CD14-positive monocyte (primary cell): ENCODE measurements at regions of chr12 and their contacts with region 1.

Region 1: DNA sequence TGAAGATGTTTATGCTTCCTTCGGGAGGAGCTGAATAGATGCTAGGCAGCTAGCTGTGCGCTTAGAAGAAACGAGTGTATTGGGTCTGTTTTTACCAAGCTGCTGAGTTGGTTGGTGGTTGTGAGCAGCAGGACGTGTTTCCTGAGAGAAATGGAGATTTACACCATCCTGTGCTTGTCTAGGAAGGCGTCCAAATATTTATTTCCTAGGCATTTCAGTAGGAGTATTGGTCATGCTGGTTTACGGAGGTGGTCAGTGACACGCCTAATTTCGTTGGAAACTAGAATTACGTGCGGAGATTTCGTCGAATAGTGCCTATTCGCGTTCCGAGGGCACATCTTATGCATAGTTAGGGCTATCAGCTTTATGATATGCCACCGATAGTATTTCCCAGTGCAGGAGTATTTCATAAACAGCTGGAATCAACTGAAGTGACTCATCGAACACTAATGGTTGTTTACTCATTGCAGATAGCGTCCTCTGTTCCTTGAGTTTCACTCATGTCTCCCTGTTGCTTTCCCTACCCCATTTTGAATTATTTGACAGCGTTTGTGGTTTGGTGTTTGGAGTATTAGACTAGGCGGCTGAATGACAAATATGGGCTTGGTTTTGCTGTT is 780 bp downstream of the TBC1D15 start:
- DNase-seq: peak; percentile 56 to 86 (median 77)
- H3K4me3 ChIP-seq: peak overlapping the region; percentile 88 to 97 (median 95)
- H3K4me3 Mint-ChIP-seq: peak overlapping the region; percentile 81 to 93
- H3K27ac ChIP-seq: peak overlapping the region; percentile 98 to 99
- H3K27ac Mint-ChIP-seq: peak overlapping the region; percentile 95 to 99 (median 98)
- H3K4me1 ChIP-seq: peaks cover 21 to 24% of the 10 kb centered on the region in 2 donors
- H3K4me1 Mint-ChIP-seq: peaks cover 23% of the 10 kb centered on the region
- H3K27me3 ChIP-seq: no peaks in the 10 kb centered on the region
- H3K27me3 Mint-ChIP-seq: peaks cover 0 to 2% (median 0%) of the 10 kb centered on the region in 3 donors
- CTCF ChIP-seq: no peak

Region 2: GRCh38 chr12:71663561-71664294 is 176.6 kb before region 1 on chr12 and contains the start of gene ZFC3H1:
- intact Hi-C with region 1: loop called in 1 of 2 experiments (anchors 10 kb)
- DNase-seq: peak; percentile 99 to 100 (median 99)
- H3K4me3 ChIP-seq: peak within 1 kb of the TSS; percentile 72 to 88 (median 84)
- H3K4me3 Mint-ChIP-seq: peak within 1 kb of the TSS; percentile 94 to 100
- H3K27ac ChIP-seq: peak within 1 kb of the TSS; percentile 92 to 100
- H3K27ac Mint-ChIP-seq: peak within 1 kb of the TSS; percentile 100
- H3K4me1 ChIP-seq: peaks cover 24 to 27% of the 10 kb centered on the region in 2 donors
- H3K4me1 Mint-ChIP-seq: peaks cover 22% of the 10 kb centered on the region
- H3K27me3 ChIP-seq: no peaks in the 10 kb centered on the region
- H3K27me3 Mint-ChIP-seq: peaks cover 0 to 2% (median 2%) of the 10 kb centered on the region in 3 donors
- CTCF ChIP-seq: peak; percentile 11
- polyA plus RNA-seq, gene ZFC3H1: 12.5 to 57.0 (median 16.3) TPM

Region 3: GRCh38 chr12:71772735-71773134 is 67.6 kb before region 1 on chr12:
- intact Hi-C with region 1: loop called in 1 of 2 experiments (anchors 10 kb)
- DNase-seq: peak in 2 of 3 donors; percentile 32 to 36
- H3K4me3 ChIP-seq: no peak overlapping the region
- H3K4me3 Mint-ChIP-seq: no peak overlapping the region
- H3K27ac ChIP-seq: peak overlapping the region in 1 of 2 donors; percentile 39
- H3K27ac Mint-ChIP-seq: no peak overlapping the region
- H3K4me1 ChIP-seq: peaks cover 4 to 8% of the 10 kb centered on the region in 2 donors
- H3K4me1 Mint-ChIP-seq: peaks cover 15% of the 10 kb centered on the region
- H3K27me3 ChIP-seq: no peaks in the 10 kb centered on the region
- H3K27me3 Mint-ChIP-seq: no peaks in the 10 kb centered on the region
- CTCF ChIP-seq: no peak

Region 4: DNA sequence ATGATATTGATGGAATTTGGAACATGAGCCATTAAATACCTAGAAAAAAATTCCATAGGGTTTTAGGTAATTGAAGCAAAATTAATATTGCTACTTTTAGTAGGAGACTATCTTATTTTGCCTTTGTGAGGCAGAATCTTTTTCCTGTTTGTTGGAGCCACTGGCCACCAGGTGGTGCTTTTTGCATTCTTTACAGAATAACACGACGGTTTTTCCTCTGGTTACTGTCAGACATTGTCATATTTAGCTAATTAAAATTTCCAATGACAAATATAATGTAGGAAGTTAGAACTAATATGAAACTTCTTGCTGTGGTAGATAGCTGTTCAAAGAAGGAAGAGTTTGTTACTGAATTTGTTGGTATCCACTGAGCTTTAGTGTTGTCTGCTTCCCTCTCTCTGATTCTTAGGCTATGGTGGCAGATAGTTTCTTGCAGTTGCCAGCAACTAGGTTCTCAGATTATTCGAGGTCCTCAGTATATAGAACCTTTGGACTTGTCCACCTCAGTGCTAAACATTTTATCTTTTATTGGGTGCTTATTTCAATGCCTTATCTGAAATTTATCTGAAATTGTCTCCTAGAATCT is 60.0 kb before region 1 on chr12:
- intact Hi-C with region 1: loop called (anchors 10 kb)
- DNase-seq: peak in 2 of 3 donors; percentile 25 to 38
- H3K4me3 ChIP-seq: no peak overlapping the region
- H3K4me3 Mint-ChIP-seq: no peak overlapping the region
- H3K27ac ChIP-seq: peak overlapping the region in 1 of 2 donors; percentile 61
- H3K27ac Mint-ChIP-seq: peak overlapping the region in 3 of 7 donors; percentile 38 to 58 (median 55)
- H3K4me1 ChIP-seq: peaks cover 0 to 2% of the 10 kb centered on the region in 2 donors
- H3K4me1 Mint-ChIP-seq: peaks cover 7% of the 10 kb centered on the region
- H3K27me3 ChIP-seq: no peaks in the 10 kb centered on the region
- H3K27me3 Mint-ChIP-seq: no peaks in the 10 kb centered on the region
- CTCF ChIP-seq: peak; percentile 83

Region 5: GRCh38 chr12:73612551-73612950 is 1772.2 kb after region 1 on chr12:
- intact Hi-C with region 1: no loop called
- DNase-seq: no peak
- H3K4me3 ChIP-seq: no peak overlapping the region
- H3K4me3 Mint-ChIP-seq: no peak overlapping the region
- H3K27ac ChIP-seq: no peak overlapping the region
- H3K27ac Mint-ChIP-seq: no peak overlapping the region
- H3K4me1 ChIP-seq: no peaks in the 10 kb centered on the region
- H3K4me1 Mint-ChIP-seq: no peaks in the 10 kb centered on the region
- H3K27me3 ChIP-seq: no peaks in the 10 kb centered on the region
- H3K27me3 Mint-ChIP-seq: no peaks in the 10 kb centered on the region
- CTCF ChIP-seq: no peak